ENCODE measurements at regions of chr2 and their contacts with region 1.

Region 1: DNA sequence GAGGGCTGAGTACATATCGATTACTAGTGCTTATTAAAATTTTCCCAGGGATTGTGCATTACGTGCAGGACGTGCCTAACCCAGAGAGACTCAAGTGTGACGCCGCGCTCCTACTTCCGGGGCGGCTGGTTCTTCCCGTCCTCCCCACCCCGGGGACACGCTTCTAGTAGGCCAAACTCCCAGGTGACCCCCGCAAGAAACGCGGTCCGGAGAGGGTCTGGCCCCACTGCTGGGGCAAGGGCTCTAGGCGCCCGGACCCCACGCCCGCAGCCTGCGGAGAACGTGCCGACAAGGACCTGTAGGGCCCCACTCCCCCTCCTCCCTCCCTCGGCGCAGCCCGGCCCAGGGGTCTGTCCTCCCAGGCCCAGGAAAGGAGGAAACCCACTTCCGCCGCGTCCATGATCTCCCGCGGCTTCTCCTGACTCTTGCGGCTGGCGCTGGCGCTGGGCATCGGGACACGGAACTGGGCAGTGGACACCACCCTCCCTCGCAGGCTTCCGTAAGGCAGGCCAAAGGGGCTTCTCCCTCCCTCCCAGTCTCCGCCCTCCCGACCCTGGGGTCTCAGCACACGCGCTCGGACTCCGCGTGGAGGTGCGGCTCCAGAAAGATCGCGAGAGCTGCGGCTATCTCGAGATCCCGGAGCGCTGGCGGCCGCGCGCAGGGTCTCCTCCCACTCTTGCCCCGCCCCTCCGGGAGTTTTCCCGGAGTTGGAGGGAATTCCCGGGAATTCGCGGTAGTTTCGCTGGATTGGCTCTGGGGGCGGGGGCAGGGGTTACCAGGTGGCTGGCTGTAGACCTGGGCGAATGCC is at the start of gene DARS1:
- DNase-seq: peak; percentile 94 to 97 (median 97)
- H3K4me3 ChIP-seq: peak within 1 kb of the TSS; percentile 98
- H3K27ac ChIP-seq: peak within 1 kb of the TSS; percentile 59 to 88
- H3K4me1 ChIP-seq: no peaks in the 10 kb centered on the region
- H3K27me3 ChIP-seq: no peaks in the 10 kb centered on the region
- CTCF ChIP-seq: no peak
- EP300 ChIP-seq: no peak
- POLR2A ChIP-seq: peak; percentile 58
- total RNA-seq, gene DARS1: 58.9 to 79.5 (median 69.7) TPM

Region 2: DNA sequence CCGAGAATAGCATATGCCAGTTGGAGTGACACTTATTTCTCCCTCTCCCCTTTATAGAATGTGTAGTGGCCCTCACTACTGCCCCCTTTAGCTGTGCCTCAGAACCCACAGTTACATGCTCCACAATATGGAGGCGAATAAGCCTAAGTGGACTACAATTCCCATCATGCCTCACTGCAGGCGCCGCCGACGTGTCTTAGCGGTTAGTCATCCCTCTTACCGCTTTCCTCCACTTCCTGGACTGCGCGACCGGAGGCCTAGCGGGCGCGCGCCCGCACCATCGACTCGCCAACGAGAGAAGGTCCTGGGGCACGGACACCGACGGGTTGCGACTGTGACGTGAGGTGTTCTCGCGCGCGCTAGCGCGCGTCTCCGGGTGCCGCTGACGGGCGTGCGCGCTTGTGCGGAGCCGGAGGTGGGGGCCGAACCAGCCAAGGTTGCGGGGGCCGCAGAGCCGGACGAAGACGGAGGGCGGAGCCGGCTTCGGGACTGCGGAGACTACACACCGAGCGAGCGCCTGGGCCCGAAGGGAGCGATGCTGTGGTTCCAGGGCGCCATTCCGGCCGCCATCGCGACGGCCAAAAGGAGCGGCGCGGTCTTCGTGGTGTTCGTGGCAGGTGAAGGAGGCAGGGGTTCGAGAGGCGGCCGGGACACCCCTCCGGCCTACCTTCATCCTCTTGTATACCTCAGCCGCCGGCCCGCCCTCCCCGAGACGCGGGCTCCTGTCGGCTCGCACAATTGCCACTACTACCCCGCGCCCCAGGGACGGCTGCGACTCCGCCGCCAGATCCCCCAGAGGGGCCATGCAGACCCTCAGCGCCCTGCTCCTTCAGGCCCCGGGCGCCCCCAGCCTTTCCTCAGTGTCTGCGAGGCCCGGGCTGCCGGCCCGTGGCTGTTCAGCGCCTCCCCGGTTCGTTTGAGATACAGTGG is 243.6 kb before region 1 on chr2 and contains the start of gene UBXN4:
- intact Hi-C with region 1: loop called in 1 of 4 experiments (anchors 5 kb)
- DNase-seq: peak; percentile 96 to 97 (median 96)
- H3K4me3 ChIP-seq: peak within 1 kb of the TSS; percentile 65
- H3K27ac ChIP-seq: peak within 1 kb of the TSS; percentile 97 to 99
- H3K4me1 ChIP-seq: peaks cover 6% of the 10 kb centered on the region
- H3K27me3 ChIP-seq: no peaks in the 10 kb centered on the region
- CTCF ChIP-seq: no peak
- EP300 ChIP-seq: no peak
- POLR2A ChIP-seq: peak; percentile 91
- total RNA-seq, gene UBXN4: 56.8 to 101 (median 87.5) TPM

Region 3: DNA sequence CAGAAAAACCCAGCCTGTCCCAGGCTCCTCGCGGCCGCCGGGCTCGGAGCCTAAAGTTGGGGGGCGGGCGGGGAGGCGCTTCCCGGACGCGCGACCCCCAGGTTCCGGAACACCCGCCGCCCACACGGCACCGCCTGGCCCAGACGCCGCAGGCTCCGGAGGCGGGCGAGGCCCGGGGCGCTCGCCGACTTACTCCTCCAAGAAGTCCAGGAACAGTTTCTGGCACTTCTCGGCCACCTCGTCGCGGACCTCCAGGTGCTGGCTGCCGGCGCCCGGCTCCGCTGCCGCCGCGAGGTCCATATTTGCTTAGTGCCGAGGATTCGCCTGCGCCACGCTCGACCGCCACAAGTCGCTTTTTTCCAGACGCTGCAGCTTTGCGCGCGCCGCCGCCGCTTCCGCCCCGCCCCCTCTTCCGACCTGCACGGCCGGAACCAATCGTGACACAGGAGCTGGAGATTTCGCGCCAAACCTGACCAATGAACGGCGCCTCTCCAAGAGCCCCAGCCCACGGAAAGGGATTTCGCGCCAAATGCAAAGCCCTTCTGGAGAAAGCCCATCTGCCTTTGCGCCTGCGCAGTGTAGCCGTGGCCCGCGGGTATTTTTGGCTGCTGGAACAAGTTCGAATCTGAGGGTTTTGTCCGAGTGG is 109.0 kb before region 1 on chr2 and contains the start of gene MCM6:
- intact Hi-C with region 1: loop called in 1 of 4 experiments (anchors 10 kb)
- DNase-seq: peak; percentile 96 to 98 (median 97)
- H3K4me3 ChIP-seq: peak within 1 kb of the TSS; percentile 89
- H3K27ac ChIP-seq: peak within 1 kb of the TSS; percentile 82 to 85
- H3K4me1 ChIP-seq: peaks cover 7% of the 10 kb centered on the region
- H3K27me3 ChIP-seq: no peaks in the 10 kb centered on the region
- CTCF ChIP-seq: peak in 2 of 3 donors; percentile 12 to 23
- EP300 ChIP-seq: no peak
- POLR2A ChIP-seq: no peak
- total RNA-seq, gene MCM6: 7.2 to 20.1 (median 15.4) TPM

Region 4: DNA sequence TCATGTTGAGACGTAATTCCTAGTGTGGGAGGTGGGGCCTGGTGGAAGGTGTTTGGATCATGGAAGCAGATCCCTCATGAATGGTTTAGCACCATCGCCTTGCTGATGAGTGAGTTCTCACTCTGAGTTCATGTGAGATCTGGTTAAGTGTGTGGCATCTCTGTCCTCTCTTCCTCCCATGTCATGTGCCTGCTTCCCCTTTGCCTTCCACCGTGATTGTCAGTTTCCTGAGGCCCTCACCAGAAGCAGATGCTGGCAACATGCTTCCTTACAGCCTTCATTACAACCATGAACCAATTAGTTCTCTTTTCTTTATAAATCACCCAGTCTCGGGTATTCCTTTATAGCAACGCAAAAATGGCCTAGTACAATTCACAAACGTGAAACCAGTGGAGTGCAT is 94.4 kb before region 1 on chr2:
- intact Hi-C with region 1: no loop called
- DNase-seq: no peak
- H3K4me3 ChIP-seq: no peak overlapping the region
- H3K27ac ChIP-seq: no peak overlapping the region
- H3K4me1 ChIP-seq: no peaks in the 10 kb centered on the region
- H3K27me3 ChIP-seq: no peaks in the 10 kb centered on the region
- CTCF ChIP-seq: no peak
- EP300 ChIP-seq: no peak
- POLR2A ChIP-seq: no peak

Measured in ovary (tissue), 10 donors.